CD8-positive, alpha-beta T cell (primary cell): ENCODE measurements at regions of chrX and their contacts with region 1.

Region 1: GRCh38 chrX:130393451-130394074 is 8.1 kb upstream of the GPR119 start:
- DNase-seq: peak in 2 of 9 experiments; percentile 2 to 5
- ATAC-seq: no peak
- H3K4me3 ChIP-seq: no peak overlapping the region
- H3K4me3 Mint-ChIP-seq: no peak overlapping the region
- H3K27ac ChIP-seq: no peak overlapping the region
- H3K27ac Mint-ChIP-seq: no peak overlapping the region
- H3K4me1 ChIP-seq: no peaks in the 10 kb centered on the region
- H3K4me1 Mint-ChIP-seq: no peaks in the 10 kb centered on the region
- H3K27me3 ChIP-seq: no peaks in the 10 kb centered on the region
- H3K27me3 Mint-ChIP-seq: peaks cover 15% of the 10 kb centered on the region
- CTCF ChIP-seq: no peak

Region 2: DNA sequence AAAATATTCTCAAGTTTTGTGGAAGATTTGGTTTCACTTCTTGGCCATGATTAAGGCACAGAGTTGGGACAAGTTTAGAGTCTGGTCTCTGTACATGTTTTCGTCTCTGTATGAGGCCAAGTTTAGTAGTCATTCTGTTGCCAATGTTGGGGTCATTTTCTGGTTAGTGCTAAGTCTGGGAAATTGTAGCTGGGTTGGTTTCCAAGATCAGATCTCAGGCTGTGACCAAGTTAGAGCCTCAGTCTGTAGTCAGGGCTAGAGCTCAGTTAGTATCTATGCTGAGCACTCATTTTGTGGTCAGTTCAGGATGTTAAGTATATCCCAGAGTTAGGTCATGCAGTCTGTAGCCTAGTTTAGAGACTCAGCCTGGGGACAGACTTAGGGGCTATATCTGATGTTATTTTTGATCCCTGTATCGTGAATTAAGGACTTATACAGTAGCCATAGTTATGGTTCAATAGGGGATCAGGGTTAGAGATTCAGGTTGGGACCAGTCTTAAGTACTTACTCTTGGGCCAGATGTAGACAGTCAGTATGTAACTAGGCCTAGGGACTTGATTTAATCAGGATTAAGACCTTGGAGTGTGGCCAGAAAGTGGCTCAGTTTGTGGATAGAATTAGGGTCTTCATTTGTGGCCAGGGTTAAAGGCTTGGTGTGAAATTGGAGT is 516.0 kb after region 1 on chrX:
- CTCF ChIA-PET with region 1: no interaction called
- POLR2A ChIA-PET with region 1: no interaction called
- intact Hi-C with region 1: loop called in 1 of 2 experiments (anchors 5 kb)
- DNase-seq: no peak
- ATAC-seq: no peak
- H3K4me3 ChIP-seq: no peak overlapping the region
- H3K4me3 Mint-ChIP-seq: no peak overlapping the region
- H3K27ac ChIP-seq: no peak overlapping the region
- H3K27ac Mint-ChIP-seq: no peak overlapping the region
- H3K4me1 ChIP-seq: no peaks in the 10 kb centered on the region
- H3K4me1 Mint-ChIP-seq: no peaks in the 10 kb centered on the region
- H3K27me3 ChIP-seq: no peaks in the 10 kb centered on the region
- H3K27me3 Mint-ChIP-seq: no peaks in the 10 kb centered on the region
- CTCF ChIP-seq: no peak